Activated CD4-positive, alpha-beta T cell treated with anti-CD3 and anti-CD28 coated beads for 36 hours (primary cell): ENCODE measurements at regions of chr5 and their contacts with region 1.

Region 1: GRCh38 chr5:118791926-118792734 is 196.2 kb downstream of the DTWD2 start:
- DNase-seq: peak; percentile 24
- ATAC-seq: peak; percentile 72
- H3K4me3 Mint-ChIP-seq: no peak overlapping the region
- H3K27ac Mint-ChIP-seq: no peak overlapping the region
- H3K4me1 Mint-ChIP-seq: no peaks in the 10 kb centered on the region
- H3K27me3 Mint-ChIP-seq: no peaks in the 10 kb centered on the region

Region 2: GRCh38 chr5:118637947-118638670 is 154.0 kb before region 1 on chr5:
- CTCF ChIA-PET with region 1: no interaction called
- POLR2A ChIA-PET with region 1: no interaction called
- intact Hi-C with region 1: no loop called
- DNase-seq: no peak
- ATAC-seq: no peak
- H3K4me3 Mint-ChIP-seq: no peak overlapping the region
- H3K27ac Mint-ChIP-seq: no peak overlapping the region
- H3K4me1 Mint-ChIP-seq: no peaks in the 10 kb centered on the region
- H3K27me3 Mint-ChIP-seq: no peaks in the 10 kb centered on the region

Region 3: GRCh38 chr5:118752575-118753368 is 39.4 kb before region 1 on chr5:
- CTCF ChIA-PET with region 1: interaction called, 12 read pairs
- POLR2A ChIA-PET with region 1: no interaction called
- intact Hi-C with region 1: no loop called
- DNase-seq: no peak
- ATAC-seq: no peak
- H3K4me3 Mint-ChIP-seq: no peak overlapping the region
- H3K27ac Mint-ChIP-seq: no peak overlapping the region
- H3K4me1 Mint-ChIP-seq: no peaks in the 10 kb centered on the region
- H3K27me3 Mint-ChIP-seq: no peaks in the 10 kb centered on the region

Region 4: GRCh38 chr5:118946138-118946800 is 154.1 kb after region 1 on chr5:
- CTCF ChIA-PET with region 1: no interaction called
- POLR2A ChIA-PET with region 1: no interaction called
- intact Hi-C with region 1: no loop called
- DNase-seq: no peak
- ATAC-seq: no peak
- H3K4me3 Mint-ChIP-seq: no peak overlapping the region
- H3K27ac Mint-ChIP-seq: no peak overlapping the region
- H3K4me1 Mint-ChIP-seq: no peaks in the 10 kb centered on the region
- H3K27me3 Mint-ChIP-seq: no peaks in the 10 kb centered on the region